ENCODE measurements at regions of chr2 and their contacts with region 1.

Region 1: GRCh38 chr2:120531863-120532600 is 186.1 kb downstream of the INHBB start:
- DNase-seq: peak; percentile 93 to 94
- ATAC-seq: peak; percentile 92 to 95
- H3K4me3 ChIP-seq: no peak overlapping the region
- H3K27ac ChIP-seq: peak overlapping the region; percentile 85 to 92 (median 88)
- H3K4me1 ChIP-seq: peaks cover 25 to 37% of the 10 kb centered on the region in 2 donors
- H3K27me3 ChIP-seq: no peaks in the 10 kb centered on the region
- CTCF ChIP-seq: peak in 3 of 5 experiments; percentile 10 to 27 (median 21)
- POLR2A ChIP-seq: peak; percentile 21 to 33

Region 2: DNA sequence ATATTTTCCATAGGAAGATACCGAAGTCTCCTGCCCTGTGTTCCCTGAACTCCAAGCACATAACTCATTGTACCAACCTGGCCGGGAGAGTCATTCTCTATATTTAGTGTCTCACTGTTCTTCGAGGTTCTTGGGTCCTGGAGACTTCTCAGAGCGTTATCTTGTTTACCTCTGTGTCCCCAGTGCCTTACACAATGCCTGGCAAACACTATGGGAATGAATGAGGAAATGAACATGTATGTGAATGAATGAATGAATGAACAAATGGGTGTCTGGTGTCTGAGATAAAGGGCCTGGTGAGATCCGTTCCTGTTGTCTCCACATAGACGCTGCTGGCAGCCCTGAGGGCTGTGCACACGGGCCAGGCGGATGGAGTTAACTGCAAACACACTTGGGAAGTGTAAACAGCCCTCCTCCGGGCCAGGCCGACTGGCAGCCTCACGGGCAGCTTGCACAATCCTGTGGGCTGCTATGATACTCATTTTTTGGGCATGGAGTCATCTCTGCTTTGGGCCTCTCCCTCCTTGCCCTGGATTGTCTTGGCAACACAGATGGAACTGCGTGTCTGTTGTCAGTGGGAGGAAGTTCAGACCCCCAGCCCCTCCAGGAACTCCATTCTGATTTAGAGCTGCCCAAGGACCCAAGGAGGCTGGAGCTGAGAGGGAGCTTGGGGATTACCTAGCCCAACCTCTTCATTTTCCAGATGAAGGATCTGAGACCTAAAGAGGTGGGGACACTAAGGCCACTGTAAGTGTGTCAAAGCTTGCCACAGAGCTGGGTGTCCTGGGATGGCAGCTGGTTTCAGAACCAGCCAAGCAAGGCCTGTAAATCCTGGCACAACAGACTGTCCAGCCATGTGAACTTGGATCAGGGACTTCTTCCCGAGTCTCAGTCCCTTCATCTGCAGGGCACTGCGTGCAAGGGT is 61.7 kb before region 1 on chr2:
- in situ Hi-C with region 1: no loop called
- intact Hi-C with region 1: loop called (anchors 2 kb)
- DNase-seq: peak; percentile 93 to 95
- ATAC-seq: peak; percentile 89 to 90
- H3K4me3 ChIP-seq: no peak overlapping the region
- H3K27ac ChIP-seq: peak overlapping the region; percentile 84 to 98 (median 93)
- H3K4me1 ChIP-seq: peaks cover 27 to 30% of the 10 kb centered on the region in 2 donors
- H3K27me3 ChIP-seq: no peaks in the 10 kb centered on the region
- CTCF ChIP-seq: no peak
- POLR2A ChIP-seq: peak in 1 of 2 donors; percentile 31

Region 3: GRCh38 chr2:120566331-120567035 is 34.5 kb after region 1 on chr2:
- in situ Hi-C with region 1: no loop called
- intact Hi-C with region 1: no loop called
- DNase-seq: peak; percentile 74 to 85
- ATAC-seq: peak; percentile 91 to 92
- H3K4me3 ChIP-seq: peak overlapping the region in 1 of 4 donors; percentile 4
- H3K27ac ChIP-seq: peak overlapping the region; percentile 35 to 68 (median 49)
- H3K4me1 ChIP-seq: peaks cover 15% of the 10 kb centered on the region in 2 donors
- H3K27me3 ChIP-seq: no peaks in the 10 kb centered on the region
- CTCF ChIP-seq: no peak
- POLR2A ChIP-seq: peak in 1 of 2 donors; percentile 24

Region 4: DNA sequence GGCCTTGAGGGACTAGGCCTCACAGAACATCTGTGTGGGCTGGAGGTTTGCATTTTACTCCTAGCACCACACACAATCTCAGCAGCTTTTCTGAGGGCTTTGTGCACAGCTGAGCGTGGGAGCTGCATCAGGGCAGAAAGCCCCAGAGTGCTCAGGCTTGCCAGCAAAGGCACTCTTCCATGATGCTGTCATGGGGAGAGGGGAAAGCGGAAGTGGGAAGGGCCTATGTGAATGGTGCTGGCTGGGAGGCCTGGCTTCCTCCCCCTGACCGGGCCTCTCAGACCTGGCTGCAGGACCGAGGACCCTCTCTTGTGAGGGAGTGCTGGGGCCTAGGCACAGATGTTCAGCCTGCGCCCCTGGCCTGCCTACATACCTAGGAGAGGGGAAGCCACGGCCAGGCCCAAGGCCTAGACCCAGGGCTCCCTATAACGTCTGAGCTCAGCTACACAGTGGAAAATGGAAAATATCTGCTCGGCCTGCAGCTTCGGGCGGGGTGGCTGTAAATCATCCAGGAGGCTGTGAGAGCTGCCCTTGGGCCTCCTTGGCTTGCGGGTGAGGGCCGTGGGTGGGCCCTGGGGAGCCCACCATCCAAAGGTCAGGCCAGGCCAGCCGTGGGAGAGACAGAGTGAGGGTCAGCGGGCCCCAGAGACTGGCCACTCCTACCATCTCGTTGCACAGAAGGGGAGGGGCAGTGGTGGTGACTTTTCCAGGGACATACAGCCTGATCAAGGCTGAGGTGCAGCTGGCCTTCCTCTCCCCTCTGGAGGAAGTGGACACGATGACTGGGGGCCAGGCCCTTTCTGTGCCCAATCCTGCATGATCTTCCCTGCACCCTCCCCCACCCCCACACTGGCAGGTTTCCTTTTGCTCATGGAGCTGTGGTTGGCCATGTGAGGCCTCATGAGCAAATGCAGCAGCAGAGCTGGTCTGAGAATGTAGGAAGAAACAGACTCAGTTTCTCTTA is 226.4 kb after region 1 on chr2:
- in situ Hi-C with region 1: no loop called
- intact Hi-C with region 1: no loop called
- DNase-seq: no peak
- ATAC-seq: peak; percentile 33 to 49
- H3K4me3 ChIP-seq: no peak overlapping the region
- H3K27ac ChIP-seq: peak overlapping the region; percentile 56 to 67 (median 65)
- H3K4me1 ChIP-seq: peaks cover 0 to 9% of the 10 kb centered on the region in 2 donors
- H3K27me3 ChIP-seq: no peaks in the 10 kb centered on the region
- CTCF ChIP-seq: no peak
- POLR2A ChIP-seq: no peak